Mucosa of descending colon (tissue), 3 donors: ENCODE measurements at regions of chr18 and their contacts with region 1.

Region 1: DNA sequence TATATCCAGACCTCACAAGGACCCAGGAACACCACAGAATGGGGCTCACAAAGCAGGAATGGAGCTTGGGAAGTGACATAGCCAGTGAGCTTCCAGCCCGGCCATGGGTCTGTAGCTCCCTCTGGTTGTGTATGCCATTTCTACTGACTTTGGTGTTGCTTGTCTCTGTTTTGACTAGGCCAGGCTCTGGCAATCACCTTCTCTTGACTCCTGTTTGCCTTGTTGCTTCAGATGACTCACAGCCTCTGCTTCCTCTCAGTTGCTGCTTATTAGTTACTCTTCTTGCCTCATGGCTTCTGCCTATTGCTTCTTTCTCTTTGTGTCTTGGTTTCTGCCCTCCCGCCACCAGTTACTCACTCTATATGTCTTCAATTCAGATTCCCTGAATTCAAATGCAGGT is 15.8 kb upstream of the IER3IP1 start:
- DNase-seq: no peak
- ATAC-seq: no peak
- H3K4me3 ChIP-seq: no peak overlapping the region
- H3K4me1 ChIP-seq: no peaks in the 10 kb centered on the region
- CTCF ChIP-seq: no peak

Region 2: GRCh38 chr18:47100214-47100831 is 91.6 kb before region 1 on chr18:
- intact Hi-C with region 1: loop called in 1 of 2 experiments (anchors 10 kb)
- DNase-seq: peak in 2 of 3 donors; percentile 49 to 75
- ATAC-seq: peak; percentile 63
- H3K4me3 ChIP-seq: no peak overlapping the region
- H3K4me1 ChIP-seq: no peaks in the 10 kb centered on the region
- CTCF ChIP-seq: peak; percentile 33

Region 3: DNA sequence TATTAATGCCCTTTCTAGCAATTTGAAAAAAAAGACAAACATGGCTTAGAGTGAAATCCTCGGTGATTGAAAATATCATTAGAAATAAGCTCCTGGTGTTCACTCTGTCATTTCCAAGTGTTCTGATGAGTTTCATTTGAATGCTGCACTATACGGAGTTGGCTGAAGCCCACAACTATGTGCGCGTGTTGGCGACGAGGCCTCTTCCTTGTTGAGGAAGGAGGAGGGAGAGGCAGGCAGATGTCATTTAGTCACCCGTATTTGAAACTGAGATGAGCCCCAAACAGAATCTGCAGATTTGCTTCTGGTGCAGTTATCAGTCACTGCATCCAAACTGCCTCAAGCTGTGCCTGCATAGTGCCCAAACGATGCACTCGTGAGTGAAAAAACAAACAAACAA is 83.0 kb after region 1 on chr18:
- intact Hi-C with region 1: no loop called
- DNase-seq: no peak
- ATAC-seq: no peak
- H3K4me3 ChIP-seq: no peak overlapping the region
- H3K4me1 ChIP-seq: no peaks in the 10 kb centered on the region
- CTCF ChIP-seq: no peak

Region 4: DNA sequence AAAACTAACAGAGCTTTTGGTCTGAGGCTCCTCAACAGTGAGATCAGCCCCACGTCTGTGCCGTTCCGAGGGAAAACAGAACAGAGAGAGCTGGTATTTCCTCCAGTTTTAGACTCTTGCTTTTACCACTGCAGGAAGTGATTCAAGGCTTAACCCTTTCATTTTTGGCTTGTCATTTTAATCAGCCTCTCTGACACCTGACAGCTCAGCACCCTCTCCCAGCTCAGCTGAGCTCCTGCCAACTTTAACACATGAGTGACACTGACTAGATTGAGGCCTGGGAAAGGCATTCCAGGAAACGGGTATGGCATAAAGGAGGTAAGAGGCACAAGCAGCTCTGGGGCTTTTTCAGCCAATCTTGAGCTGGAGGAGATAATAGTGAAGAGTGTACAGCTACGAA is 298.9 kb after region 1 on chr18:
- intact Hi-C with region 1: no loop called
- DNase-seq: no peak
- ATAC-seq: no peak
- H3K4me3 ChIP-seq: no peak overlapping the region
- H3K4me1 ChIP-seq: no peaks in the 10 kb centered on the region
- CTCF ChIP-seq: no peak